ENCODE measurements at regions of chr3 and their contacts with region 1.

Region 1: DNA sequence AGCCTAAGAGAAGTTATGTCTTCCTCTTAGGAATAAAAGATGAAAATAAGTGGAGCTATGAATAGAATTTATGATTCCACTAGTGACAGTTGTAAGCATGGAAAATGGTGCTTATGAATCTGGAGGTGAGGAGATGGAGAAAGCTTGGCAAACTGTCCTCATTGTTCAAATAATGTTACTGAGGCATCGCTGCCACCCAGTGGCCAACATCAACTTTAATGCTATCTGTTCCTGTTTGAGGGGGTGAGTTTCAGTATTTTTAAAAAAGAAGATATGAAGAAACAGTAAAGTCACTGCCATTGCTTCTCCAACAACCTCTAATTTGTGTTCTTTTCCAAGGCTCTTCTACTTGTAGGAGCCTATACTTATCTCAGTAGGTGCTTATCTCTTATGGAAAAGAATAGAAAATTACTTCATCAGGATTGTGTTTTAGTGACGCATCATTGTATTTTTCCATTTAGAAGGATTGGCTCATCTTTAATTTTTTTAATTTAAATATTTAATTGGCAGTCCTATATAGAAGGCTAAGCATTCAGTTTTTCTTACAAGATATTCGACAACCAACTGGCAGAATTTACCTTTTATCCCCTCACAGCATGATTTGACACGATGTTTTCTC is 260.4 kb upstream of the P2RY1 start:
- DNase-seq: peak; percentile 36 to 58
- ATAC-seq: peak; percentile 92 to 93
- H3K4me3 ChIP-seq: no peak overlapping the region
- H3K27ac ChIP-seq: no peak overlapping the region
- H3K4me1 ChIP-seq: no peaks in the 10 kb centered on the region
- CTCF ChIP-seq: peak; percentile 79
- EP300 ChIP-seq: no peak
- POLR2A ChIP-seq: no peak
- RAD21 ChIP-seq: peak; percentile 78 to 79

Region 2: GRCh38 chr3:152474585-152474984 is 100.0 kb before region 1 on chr3:
- CTCF ChIA-PET with region 1: interaction called, 13 read pairs
- POLR2A ChIA-PET with region 1: no interaction called
- DNase-seq: peak; percentile 16 to 71
- ATAC-seq: peak; percentile 75 to 85; a peak in 5 of 6 replicates
- H3K4me3 ChIP-seq: no peak overlapping the region
- H3K27ac ChIP-seq: no peak overlapping the region
- H3K4me1 ChIP-seq: no peaks in the 10 kb centered on the region
- CTCF ChIP-seq: peak; percentile 68
- EP300 ChIP-seq: no peak
- POLR2A ChIP-seq: no peak
- RAD21 ChIP-seq: peak; percentile 70